Activated CD4-positive, alpha-beta T cell treated with anti-CD3 and anti-CD28 coated beads for 36 hours (primary cell): ENCODE measurements at regions of chr20 and their contacts with region 1.

Region 1: GRCh38 chr20:3010985-3011723 is 32.3 kb upstream of the GNRH2 start:
- DNase-seq: peak; percentile 46
- ATAC-seq: peak; percentile 69
- H3K4me3 Mint-ChIP-seq: peak overlapping the region; percentile 37
- H3K27ac Mint-ChIP-seq: peak overlapping the region; percentile 94
- H3K4me1 Mint-ChIP-seq: peaks cover 70% of the 10 kb centered on the region
- H3K27me3 Mint-ChIP-seq: no peaks in the 10 kb centered on the region

Region 2: GRCh38 chr20:2840138-2840966 is 170.8 kb before region 1 on chr20 and contains the starts of genes PCED1A and VPS16:
- CTCF ChIA-PET with region 1: no interaction called
- POLR2A ChIA-PET with region 1: no interaction called
- intact Hi-C with region 1: loop called in 1 of 2 experiments (anchors 1 kb)
- DNase-seq: peak; percentile 94
- ATAC-seq: peak; percentile 99
- H3K4me3 Mint-ChIP-seq: peak within 1 kb of the TSS; percentile 76
- H3K27ac Mint-ChIP-seq: peak within 1 kb of the TSS; percentile 84
- H3K4me1 Mint-ChIP-seq: peaks cover 32% of the 10 kb centered on the region
- H3K27me3 Mint-ChIP-seq: no peaks in the 10 kb centered on the region
- total RNA-seq, gene PCED1A: 29.4 to 35.3 TPM
- total RNA-seq, gene VPS16: 32.3 to 47.6 TPM

Region 3: DNA sequence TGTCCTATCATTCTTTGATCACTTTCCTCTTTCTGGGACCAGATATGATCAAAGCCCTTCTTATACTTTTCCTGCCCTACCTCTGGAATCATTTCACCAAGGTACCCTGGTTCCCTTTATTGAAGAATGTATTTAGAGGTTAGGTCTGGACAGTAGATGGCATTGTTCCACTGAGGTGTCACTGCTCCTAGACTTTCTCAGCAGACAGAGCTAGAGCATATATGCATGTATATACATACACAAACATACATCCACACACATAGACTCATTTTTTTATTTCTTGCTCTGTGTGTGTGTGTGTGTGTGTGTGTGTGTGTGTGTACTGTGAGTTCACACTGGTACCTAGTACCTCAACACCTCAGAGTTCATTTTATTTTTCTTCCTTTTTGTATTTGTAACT is 97.0 kb before region 1 on chr20:
- CTCF ChIA-PET with region 1: no interaction called
- POLR2A ChIA-PET with region 1: no interaction called
- intact Hi-C with region 1: loop called in 1 of 2 experiments (anchors 1 kb)
- DNase-seq: no peak
- ATAC-seq: peak; percentile 31
- H3K4me3 Mint-ChIP-seq: no peak overlapping the region
- H3K27ac Mint-ChIP-seq: no peak overlapping the region
- H3K4me1 Mint-ChIP-seq: peaks cover 16% of the 10 kb centered on the region
- H3K27me3 Mint-ChIP-seq: no peaks in the 10 kb centered on the region

Region 4: DNA sequence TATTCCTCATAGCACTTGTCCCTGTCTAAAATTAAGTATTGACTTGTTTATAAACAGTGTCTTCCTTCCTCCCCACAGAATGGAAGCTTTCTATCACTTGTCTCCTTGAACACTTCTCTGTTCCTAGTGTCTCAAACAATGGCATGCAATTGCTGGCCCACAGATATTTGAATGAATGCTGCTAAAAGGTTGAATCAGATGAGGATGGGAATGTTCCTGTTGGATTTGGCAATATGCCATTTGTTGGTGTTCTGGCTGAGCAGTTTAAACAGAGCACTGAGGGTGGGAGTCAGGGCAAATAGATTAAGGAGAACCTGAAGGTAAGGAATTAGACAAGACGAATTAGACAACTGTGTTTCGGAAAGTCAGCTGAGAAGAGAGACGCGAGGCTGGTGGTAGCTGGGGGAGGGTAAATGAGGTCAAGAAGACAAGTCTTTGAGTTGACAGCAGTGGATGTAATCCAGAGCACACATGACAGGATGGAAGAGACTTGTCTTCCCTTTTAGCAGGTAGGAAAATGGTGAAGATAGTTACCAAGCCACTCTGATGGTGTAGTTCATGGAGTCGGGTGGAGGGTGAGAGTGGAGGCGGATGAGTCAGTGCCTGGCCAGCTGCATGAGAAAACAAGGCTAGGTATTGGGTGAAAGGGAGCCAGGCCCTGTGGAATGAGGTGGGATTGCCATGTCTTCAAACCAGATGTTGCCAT is 26.0 kb before region 1 on chr20:
- CTCF ChIA-PET with region 1: interaction called, 18 read pairs
- POLR2A ChIA-PET with region 1: interaction called, 39 read pairs
- intact Hi-C with region 1: loop called (anchors 1 kb)
- DNase-seq: peak; percentile 71
- ATAC-seq: no peak
- H3K4me3 Mint-ChIP-seq: no peak overlapping the region
- H3K27ac Mint-ChIP-seq: no peak overlapping the region
- H3K4me1 Mint-ChIP-seq: peaks cover 25% of the 10 kb centered on the region
- H3K27me3 Mint-ChIP-seq: no peaks in the 10 kb centered on the region

Region 5: GRCh38 chr20:3032624-3033023 is 21.5 kb after region 1 on chr20:
- CTCF ChIA-PET with region 1: interaction called, 3 read pairs
- POLR2A ChIA-PET with region 1: interaction called, 17 read pairs
- intact Hi-C with region 1: loop called (anchors 1 to 2 kb)
- DNase-seq: no peak
- ATAC-seq: no peak
- H3K4me3 Mint-ChIP-seq: no peak overlapping the region
- H3K27ac Mint-ChIP-seq: no peak overlapping the region
- H3K4me1 Mint-ChIP-seq: peaks cover 12% of the 10 kb centered on the region
- H3K27me3 Mint-ChIP-seq: no peaks in the 10 kb centered on the region

Region 6: GRCh38 chr20:3121271-3121911 is 110.2 kb after region 1 on chr20:
- CTCF ChIA-PET with region 1: no interaction called
- POLR2A ChIA-PET with region 1: no interaction called
- intact Hi-C with region 1: loop called in 1 of 2 experiments (anchors 1 kb)
- DNase-seq: no peak
- ATAC-seq: no peak
- H3K4me3 Mint-ChIP-seq: no peak overlapping the region
- H3K27ac Mint-ChIP-seq: peak overlapping the region; percentile 30
- H3K4me1 Mint-ChIP-seq: peaks cover 40% of the 10 kb centered on the region
- H3K27me3 Mint-ChIP-seq: no peaks in the 10 kb centered on the region